ENCODE measurements at regions of chr12 and their contacts with region 1.

Region 1: DNA sequence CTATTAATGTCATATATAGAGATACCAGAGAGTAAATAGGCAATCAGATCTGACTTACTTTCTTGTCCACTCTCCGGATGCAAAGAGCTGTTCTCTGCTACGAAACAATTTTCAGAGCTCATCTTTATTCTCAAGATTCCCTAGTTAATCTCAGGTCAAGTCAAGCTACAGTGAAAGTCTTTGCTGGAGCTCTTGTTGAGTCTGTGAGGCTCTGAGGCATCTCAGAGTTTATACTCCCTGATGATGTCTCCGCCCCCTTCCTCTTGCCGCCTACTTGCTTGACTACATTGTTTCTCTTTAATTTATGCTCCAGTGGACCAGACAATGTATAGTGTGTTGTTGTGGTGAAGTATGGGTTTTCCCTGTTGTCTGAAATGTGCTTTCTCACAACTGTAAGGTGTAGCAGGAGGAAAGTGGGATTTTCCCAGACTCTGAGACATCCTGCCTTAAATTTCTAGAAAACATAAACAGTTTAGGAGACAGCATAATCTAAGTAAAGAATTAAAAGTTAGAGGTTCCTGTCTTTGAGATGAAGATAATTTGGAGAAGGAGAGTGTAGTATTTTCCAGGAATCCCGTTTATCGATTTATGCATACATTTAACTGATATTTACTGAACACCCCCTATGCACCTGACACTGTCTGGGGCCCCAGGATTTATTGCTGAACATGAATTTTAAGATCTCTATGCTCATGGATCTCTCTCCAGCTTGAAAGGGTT is at the start of gene CD69:
- DNase-seq: peak; percentile 87 to 93 (median 90)
- H3K4me3 ChIP-seq: peak within 1 kb of the TSS; percentile 71 to 80
- H3K4me3 Mint-ChIP-seq: peak within 1 kb of the TSS; percentile 87 to 100 (median 98)
- H3K27ac ChIP-seq: peak within 1 kb of the TSS; percentile 98
- H3K27ac Mint-ChIP-seq: peak within 1 kb of the TSS; percentile 98 to 100 (median 100)
- H3K4me1 ChIP-seq: peaks cover 59% of the 10 kb centered on the region
- H3K4me1 Mint-ChIP-seq: peaks cover 42 to 70% (median 51%) of the 10 kb centered on the region in 4 donors
- H3K27me3 ChIP-seq: no peaks in the 10 kb centered on the region
- H3K27me3 Mint-ChIP-seq: no peaks in the 10 kb centered on the region
- total RNA-seq, gene CD69: 31.0 to 35.9 TPM

Region 2: GRCh38 chr12:9615420-9616136 is 145.3 kb before region 1 on chr12:
- CTCF ChIA-PET with region 1: no interaction called
- POLR2A ChIA-PET with region 1: interaction called, 16 read pairs
- intact Hi-C with region 1: no loop called
- DNase-seq: peak; percentile 39 to 85 (median 76)
- H3K4me3 ChIP-seq: peak overlapping the region in 1 of 2 donors; percentile 46
- H3K4me3 Mint-ChIP-seq: peak overlapping the region; percentile 80 to 94 (median 88)
- H3K27ac ChIP-seq: peak overlapping the region; percentile 84
- H3K27ac Mint-ChIP-seq: peak overlapping the region; percentile 95 to 100 (median 98)
- H3K4me1 ChIP-seq: peaks cover 63% of the 10 kb centered on the region
- H3K4me1 Mint-ChIP-seq: peaks cover 61 to 97% (median 75%) of the 10 kb centered on the region in 4 donors
- H3K27me3 ChIP-seq: no peaks in the 10 kb centered on the region
- H3K27me3 Mint-ChIP-seq: no peaks in the 10 kb centered on the region

Region 3: DNA sequence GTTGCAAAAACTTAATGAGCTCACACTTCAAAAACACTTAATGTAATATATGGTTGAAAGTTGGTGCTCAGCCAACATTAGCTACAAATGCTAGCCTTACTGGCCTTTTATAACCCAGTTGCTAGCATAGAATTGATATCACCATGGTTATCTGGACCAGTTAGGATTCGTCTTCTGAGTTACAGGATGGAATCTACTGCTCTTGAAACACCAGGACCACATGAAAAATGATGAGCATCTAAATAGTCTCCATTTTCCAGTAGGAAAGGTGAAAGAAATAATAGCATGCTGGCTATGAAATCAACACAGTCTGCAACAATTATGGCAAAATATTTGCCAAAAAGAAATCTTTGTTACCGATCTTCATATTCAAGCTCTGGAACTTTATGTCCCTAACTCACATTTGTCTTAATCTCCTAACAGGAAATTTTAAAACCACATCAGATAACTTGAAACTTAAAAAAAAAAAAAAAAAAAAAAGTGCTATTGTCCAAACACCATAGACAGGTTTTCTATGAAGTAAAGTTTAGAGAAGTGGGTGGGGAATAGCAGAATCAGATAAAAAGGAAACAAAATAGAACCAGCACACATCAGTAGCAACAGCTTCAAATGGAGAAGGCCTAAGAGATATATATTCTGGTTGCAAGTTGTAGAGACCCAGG is 12.5 kb after region 1 on chr12:
- CTCF ChIA-PET with region 1: interaction called, 12 read pairs
- POLR2A ChIA-PET with region 1: interaction called, 151 read pairs
- intact Hi-C with region 1: loop called (anchors 1 kb)
- DNase-seq: peak in 3 of 5 donors; percentile 45 to 59 (median 50)
- H3K4me3 ChIP-seq: no peak overlapping the region
- H3K4me3 Mint-ChIP-seq: peak overlapping the region; percentile 26 to 79 (median 68)
- H3K27ac ChIP-seq: peak overlapping the region; percentile 24
- H3K27ac Mint-ChIP-seq: peak overlapping the region; percentile 15 to 88 (median 77)
- H3K4me1 ChIP-seq: peaks cover 82% of the 10 kb centered on the region
- H3K4me1 Mint-ChIP-seq: peaks cover 68 to 93% (median 82%) of the 10 kb centered on the region in 4 donors
- H3K27me3 ChIP-seq: no peaks in the 10 kb centered on the region
- H3K27me3 Mint-ChIP-seq: no peaks in the 10 kb centered on the region

Region 4: DNA sequence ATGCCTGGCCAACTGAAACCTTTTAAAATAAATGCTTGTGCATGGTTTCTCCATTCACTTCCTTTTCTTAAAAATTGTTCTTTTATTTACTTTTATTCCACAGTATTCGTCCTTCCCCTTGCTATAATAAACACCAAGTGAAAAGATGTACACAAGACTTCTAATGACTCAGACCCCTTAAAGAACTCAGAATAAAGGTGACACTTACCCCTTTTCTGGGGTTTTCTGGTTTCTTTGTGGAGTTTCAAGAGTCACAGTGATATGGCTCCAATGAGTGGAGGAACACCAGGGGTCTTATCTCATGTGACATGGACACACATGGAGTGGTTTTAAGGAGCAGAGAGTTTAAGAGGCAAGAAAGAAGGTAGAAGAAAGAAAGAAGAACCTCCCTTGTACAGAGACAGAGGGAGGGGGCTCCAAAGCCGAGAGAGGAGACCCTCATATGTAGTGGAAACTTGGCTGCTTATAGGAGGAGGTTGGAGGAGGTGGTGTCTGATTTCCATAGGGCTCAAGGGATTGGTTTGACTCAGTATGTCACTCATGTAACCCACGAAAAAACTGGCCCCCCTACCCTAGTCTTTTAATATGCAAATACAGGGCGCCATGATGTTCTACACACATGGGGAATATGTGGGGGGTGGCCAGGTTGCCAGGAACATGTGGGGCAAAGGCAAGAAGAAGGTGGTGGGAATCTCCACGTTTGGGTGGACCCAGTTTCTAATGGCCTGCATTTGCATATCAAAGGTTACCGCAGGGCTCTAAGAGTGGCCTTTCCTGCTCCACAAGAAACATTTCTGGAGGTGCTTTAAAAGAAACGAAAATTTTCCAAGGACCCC is 21.9 kb after region 1 on chr12:
- CTCF ChIA-PET with region 1: interaction called, 4 read pairs
- POLR2A ChIA-PET with region 1: interaction called, 29 read pairs
- intact Hi-C with region 1: no loop called
- DNase-seq: no peak
- H3K4me3 ChIP-seq: no peak overlapping the region
- H3K4me3 Mint-ChIP-seq: peak overlapping the region in 1 of 8 donors; percentile 36
- H3K27ac ChIP-seq: no peak overlapping the region
- H3K27ac Mint-ChIP-seq: peak overlapping the region in 2 of 7 donors; percentile 39 to 46
- H3K4me1 ChIP-seq: peaks cover 18% of the 10 kb centered on the region
- H3K4me1 Mint-ChIP-seq: peaks cover 25 to 56% (median 46%) of the 10 kb centered on the region in 4 donors
- H3K27me3 ChIP-seq: no peaks in the 10 kb centered on the region
- H3K27me3 Mint-ChIP-seq: no peaks in the 10 kb centered on the region